ENCODE measurements at regions of chr14 and their contacts with region 1.

Region 1: GRCh38 chr14:75002392-75003249 is at the start of gene EIF2B2:
- DNase-seq: peak; percentile 98
- ATAC-seq: peak; percentile 99
- total RNA-seq, gene EIF2B2: 34.0 TPM

Region 2: GRCh38 chr14:74945823-74946682 is 56.6 kb before region 1 on chr14:
- intact Hi-C with region 1: loop called (anchors 2 kb)
- DNase-seq: peak; percentile 89
- ATAC-seq: peak; percentile 83

Region 3: DNA sequence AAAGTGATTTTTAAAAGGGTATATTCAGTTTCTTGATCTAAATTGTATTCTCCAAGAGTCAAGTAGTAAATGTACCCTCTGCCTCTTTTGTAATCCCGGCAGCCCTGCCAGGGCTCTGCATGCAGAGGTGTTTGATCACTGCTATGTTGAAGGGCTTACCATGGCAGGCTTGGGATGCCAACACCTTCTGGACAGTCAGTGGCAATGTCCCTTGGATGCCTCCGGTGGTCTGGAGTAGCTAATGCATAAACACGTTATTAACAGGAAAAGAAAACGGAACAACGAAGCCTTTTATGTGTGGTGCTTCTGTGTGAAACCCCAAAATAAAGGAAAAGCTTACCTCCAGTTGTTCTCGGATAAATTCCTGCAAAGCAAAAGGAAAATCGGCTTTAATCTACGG is 20.0 kb after region 1 on chr14:
- intact Hi-C with region 1: loop called (anchors 2 kb)
- DNase-seq: peak; percentile 75
- ATAC-seq: peak; percentile 96

Region 4: DNA sequence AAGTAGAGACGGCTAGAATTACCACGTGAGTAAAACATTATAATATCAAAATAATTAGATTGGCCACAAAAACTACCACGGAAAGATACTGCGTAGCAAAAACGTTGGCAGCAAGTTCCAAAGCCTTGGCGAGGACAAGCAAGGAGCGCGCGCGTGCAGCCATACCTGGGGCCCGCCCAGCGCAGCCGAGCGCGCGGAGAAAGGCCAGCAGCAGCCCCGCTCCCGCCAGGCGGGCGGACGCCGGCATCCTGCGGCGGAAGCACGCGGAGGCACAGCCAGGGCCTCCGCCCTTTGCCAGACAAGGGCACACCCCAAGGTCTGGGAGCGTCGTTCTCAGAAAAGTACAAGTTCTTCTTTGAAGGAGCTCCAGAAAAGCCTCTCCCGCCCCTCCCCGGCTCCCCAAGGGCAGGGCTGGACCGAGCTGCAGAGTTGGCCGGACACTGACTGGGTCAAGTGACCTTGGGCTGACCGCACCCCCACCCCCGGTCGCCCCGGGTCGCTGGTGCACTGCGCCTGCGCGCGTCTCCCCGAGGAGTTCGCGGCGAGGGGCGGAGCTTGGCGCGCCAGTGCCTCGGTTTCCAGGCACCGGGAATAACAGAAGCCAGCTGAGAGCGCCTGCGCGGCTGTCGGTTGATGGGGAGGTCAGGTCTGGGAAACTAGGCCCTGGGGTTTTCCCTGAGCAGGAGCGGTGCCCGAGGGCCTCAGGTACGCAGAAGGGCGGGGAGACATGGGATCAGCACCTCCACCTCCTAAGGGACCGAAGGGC is 66.6 kb after region 1 on chr14 and contains the start of gene ZC2HC1C:
- intact Hi-C with region 1: loop called (anchors 5 kb)
- DNase-seq: peak; percentile 98
- ATAC-seq: peak; percentile 97
- total RNA-seq, gene ZC2HC1C: 11.4 TPM

Measured in Right ventricle myocardium inferior (tissue), 1 donor.